ENCODE measurements at regions of chr20 and their contacts with region 1.

Region 1: DNA sequence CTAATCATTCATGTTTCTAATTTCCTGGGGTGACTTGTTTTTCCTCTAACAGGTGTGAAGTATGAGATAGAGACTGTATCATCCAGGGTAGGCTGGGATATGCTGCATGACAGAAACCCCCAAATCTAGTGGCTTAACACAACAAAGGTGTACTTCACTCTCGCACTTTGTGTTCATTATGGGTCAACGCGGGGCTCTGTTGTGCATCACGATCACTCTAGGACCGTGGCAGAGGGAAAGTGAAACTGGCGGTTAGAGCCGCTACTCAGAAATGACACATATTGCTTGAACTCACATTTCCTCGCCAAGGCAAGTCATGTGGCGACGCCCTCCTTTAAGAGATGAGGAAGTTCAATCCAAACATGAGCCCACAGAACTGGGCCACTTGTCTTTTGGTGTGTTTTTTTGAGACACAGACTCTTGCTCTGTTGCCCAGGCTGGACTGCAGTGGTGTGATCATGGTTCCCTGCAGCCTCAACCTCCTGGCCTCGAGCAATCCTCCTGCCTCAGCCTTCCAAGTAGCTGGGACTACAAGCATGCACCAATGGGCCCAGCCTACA is 41.3 kb downstream of the PCNA start:
- DNase-seq: peak; percentile 54 to 93 (median 78)
- ATAC-seq: peak; percentile 92
- H3K4me3 ChIP-seq: peak overlapping the region; percentile 44
- H3K4me3 Mint-ChIP-seq: peak overlapping the region; percentile 83
- H3K27ac ChIP-seq: peak overlapping the region; percentile 81 to 84
- H3K27ac Mint-ChIP-seq: peak overlapping the region; percentile 97
- H3K4me1 ChIP-seq: peaks cover 17% of the 10 kb centered on the region
- H3K4me1 Mint-ChIP-seq: peaks cover 24% of the 10 kb centered on the region
- H3K27me3 ChIP-seq: no peaks in the 10 kb centered on the region
- H3K27me3 Mint-ChIP-seq: no peaks in the 10 kb centered on the region
- CTCF ChIP-seq: no peak

Region 2: DNA sequence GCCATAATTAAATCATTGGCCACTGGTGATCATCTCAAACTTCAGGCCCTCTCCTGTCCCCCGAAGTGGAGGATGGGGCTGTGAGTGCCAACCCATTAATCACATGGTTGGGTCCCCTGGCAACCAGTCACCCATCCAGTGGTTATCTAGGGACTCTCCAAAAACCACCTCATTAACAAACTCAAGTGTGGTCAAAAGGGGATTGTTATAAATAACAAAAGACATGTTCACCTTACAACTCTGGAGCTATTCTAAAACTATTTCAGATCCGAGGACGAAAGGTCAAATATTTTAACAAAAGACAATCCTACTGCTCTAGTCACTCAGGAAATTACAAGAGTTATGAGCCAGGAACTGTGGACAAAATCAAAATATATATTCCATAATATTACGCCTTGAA is 452.3 kb before region 1 on chr20:
- CTCF ChIA-PET with region 1: no interaction called
- POLR2A ChIA-PET with region 1: no interaction called
- intact Hi-C with region 1: no loop called
- DNase-seq: no peak
- ATAC-seq: no peak
- H3K4me3 ChIP-seq: no peak overlapping the region
- H3K4me3 Mint-ChIP-seq: no peak overlapping the region
- H3K27ac ChIP-seq: no peak overlapping the region
- H3K27ac Mint-ChIP-seq: no peak overlapping the region
- H3K4me1 ChIP-seq: no peaks in the 10 kb centered on the region
- H3K4me1 Mint-ChIP-seq: no peaks in the 10 kb centered on the region
- H3K27me3 ChIP-seq: peaks cover 0 to 2% of the 10 kb centered on the region in 2 experiments
- H3K27me3 Mint-ChIP-seq: peaks cover 15% of the 10 kb centered on the region
- CTCF ChIP-seq: no peak

Region 3: GRCh38 chr20:5001174-5002076 is 77.1 kb before region 1 on chr20 and contains the start of gene SLC23A2:
- CTCF ChIA-PET with region 1: no interaction called
- POLR2A ChIA-PET with region 1: interaction called, 3 read pairs
- intact Hi-C with region 1: loop called in 1 of 2 experiments (anchors 10 kb)
- DNase-seq: peak; percentile 11 to 81 (median 56)
- ATAC-seq: peak; percentile 88
- H3K4me3 ChIP-seq: peak within 1 kb of the TSS; percentile 72
- H3K4me3 Mint-ChIP-seq: peak within 1 kb of the TSS; percentile 97
- H3K27ac ChIP-seq: peak within 1 kb of the TSS; percentile 43 to 63
- H3K27ac Mint-ChIP-seq: peak within 1 kb of the TSS; percentile 95
- H3K4me1 ChIP-seq: peaks cover 15% of the 10 kb centered on the region
- H3K4me1 Mint-ChIP-seq: peaks cover 37% of the 10 kb centered on the region
- H3K27me3 ChIP-seq: no peaks in the 10 kb centered on the region
- H3K27me3 Mint-ChIP-seq: no peaks in the 10 kb centered on the region
- CTCF ChIP-seq: no peak
- total RNA-seq, gene SLC23A2: 21.1 to 22.0 TPM

Region 4: GRCh38 chr20:5056801-5057599 is 21.5 kb before region 1 on chr20:
- CTCF ChIA-PET with region 1: interaction called, 10 read pairs
- POLR2A ChIA-PET with region 1: interaction called, 3 read pairs
- intact Hi-C with region 1: loop called (anchors 1 kb)
- DNase-seq: peak; percentile 44 to 93 (median 80)
- ATAC-seq: peak; percentile 96
- H3K4me3 ChIP-seq: no peak overlapping the region
- H3K4me3 Mint-ChIP-seq: peak overlapping the region; percentile 19
- H3K27ac ChIP-seq: peak overlapping the region in 1 of 2 experiments; percentile 52
- H3K27ac Mint-ChIP-seq: peak overlapping the region; percentile 64
- H3K4me1 ChIP-seq: peaks cover 22% of the 10 kb centered on the region
- H3K4me1 Mint-ChIP-seq: peaks cover 21% of the 10 kb centered on the region
- H3K27me3 ChIP-seq: no peaks in the 10 kb centered on the region
- H3K27me3 Mint-ChIP-seq: no peaks in the 10 kb centered on the region
- CTCF ChIP-seq: peak; percentile 40

Region 5: GRCh38 chr20:5150226-5151076 is 72.0 kb after region 1 on chr20:
- CTCF ChIA-PET with region 1: no interaction called
- POLR2A ChIA-PET with region 1: no interaction called
- intact Hi-C with region 1: no loop called
- DNase-seq: no peak
- ATAC-seq: no peak
- H3K4me3 ChIP-seq: no peak overlapping the region
- H3K4me3 Mint-ChIP-seq: no peak overlapping the region
- H3K27ac ChIP-seq: no peak overlapping the region
- H3K27ac Mint-ChIP-seq: no peak overlapping the region
- H3K4me1 ChIP-seq: peaks cover 20% of the 10 kb centered on the region
- H3K4me1 Mint-ChIP-seq: peaks cover 73% of the 10 kb centered on the region
- H3K27me3 ChIP-seq: no peaks in the 10 kb centered on the region
- H3K27me3 Mint-ChIP-seq: no peaks in the 10 kb centered on the region
- CTCF ChIP-seq: no peak

Measured in CD8-positive, alpha-beta T cell (primary cell).